ENCODE measurements at regions of chr2 and their contacts with region 1.

Region 1: GRCh38 chr2:11778923-11779757 is 32.7 kb downstream of the LPIN1 start:
- DNase-seq: peak; percentile 59 to 76
- ATAC-seq: peak; percentile 72 to 87
- H3K4me3 ChIP-seq: no peak overlapping the region
- H3K27ac ChIP-seq: peak overlapping the region; percentile 58 to 70 (median 66)
- H3K4me1 ChIP-seq: peaks cover 40 to 51% of the 10 kb centered on the region in 2 donors
- H3K27me3 ChIP-seq: no peaks in the 10 kb centered on the region
- CTCF ChIP-seq: peak; percentile 97 to 99 (median 98)
- POLR2A ChIP-seq: no peak

Region 2: GRCh38 chr2:11477994-11478393 is 301.1 kb before region 1 on chr2:
- in situ Hi-C with region 1: loop called (anchors 25 kb)
- intact Hi-C with region 1: no loop called
- DNase-seq: peak; percentile 81 to 82
- ATAC-seq: peak; percentile 75 to 76
- H3K4me3 ChIP-seq: no peak overlapping the region
- H3K27ac ChIP-seq: no peak overlapping the region
- H3K4me1 ChIP-seq: no peaks in the 10 kb centered on the region
- H3K27me3 ChIP-seq: no peaks in the 10 kb centered on the region
- CTCF ChIP-seq: peak; percentile 76 to 92 (median 88)
- POLR2A ChIP-seq: no peak

Region 3: GRCh38 chr2:11738589-11739436 is 40.3 kb before region 1 on chr2:
- in situ Hi-C with region 1: no loop called
- intact Hi-C with region 1: loop called (anchors 2 kb)
- DNase-seq: peak; percentile 96 to 99
- ATAC-seq: peak; percentile 93 to 94
- H3K4me3 ChIP-seq: no peak overlapping the region
- H3K27ac ChIP-seq: peak overlapping the region; percentile 85 to 90 (median 88)
- H3K4me1 ChIP-seq: peaks cover 17 to 23% of the 10 kb centered on the region in 2 donors
- H3K27me3 ChIP-seq: no peaks in the 10 kb centered on the region
- CTCF ChIP-seq: peak; percentile 34 to 60 (median 55)
- POLR2A ChIP-seq: peak in 1 of 2 donors; percentile 37